Naive thymus-derived CD4-positive, alpha-beta T cell (primary cell): ENCODE measurements at regions of chr5 and their contacts with region 1.

Region 1: GRCh38 chr5:54905943-54906537 is 79.4 kb downstream of the ESM1 start:
- DNase-seq: peak; percentile 26 to 65 (median 53)
- ATAC-seq: peak; percentile 55
- H3K4me3 ChIP-seq: no peak overlapping the region
- H3K4me3 Mint-ChIP-seq: no peak overlapping the region
- H3K27ac ChIP-seq: no peak overlapping the region
- H3K27ac Mint-ChIP-seq: no peak overlapping the region
- H3K4me1 ChIP-seq: peaks cover 0 to 10% of the 10 kb centered on the region in 2 donors
- H3K4me1 Mint-ChIP-seq: peaks cover 6 to 64% (median 10%) of the 10 kb centered on the region in 7 donors
- H3K27me3 ChIP-seq: no peaks in the 10 kb centered on the region
- H3K27me3 Mint-ChIP-seq: peaks cover 0 to 51% (median 6%) of the 10 kb centered on the region in 5 donors

Region 2: DNA sequence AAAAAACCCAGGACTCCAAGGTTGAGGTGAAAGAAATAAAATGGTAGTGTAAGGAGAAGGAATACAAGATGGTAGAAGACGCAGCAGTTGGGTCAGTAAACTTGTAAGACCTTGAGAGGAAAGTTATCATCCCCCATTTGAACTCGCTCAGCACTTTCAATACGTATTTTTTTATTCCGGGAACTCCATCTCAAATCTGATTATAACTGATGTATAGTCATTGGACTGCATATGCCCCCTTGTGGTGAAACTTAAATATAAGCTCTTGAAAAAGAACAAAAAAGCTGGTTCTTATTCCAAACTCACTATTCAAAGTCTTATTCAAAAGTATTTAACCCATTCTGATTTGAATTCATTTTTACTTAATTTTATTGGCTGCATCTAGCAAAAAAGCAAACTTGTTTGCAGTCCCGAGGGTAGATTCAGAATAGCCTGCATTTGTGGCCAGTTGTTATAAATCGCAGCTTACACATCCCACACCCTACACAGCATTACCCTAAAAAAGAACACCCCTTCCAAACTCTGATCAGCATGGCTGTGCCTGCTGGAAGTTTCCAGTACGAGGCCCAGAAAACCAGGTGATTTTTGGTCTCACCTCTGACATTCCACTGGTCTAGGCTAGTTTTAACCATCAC is 38.6 kb before region 1 on chr5:
- CTCF ChIA-PET with region 1: no interaction called
- POLR2A ChIA-PET with region 1: no interaction called
- intact Hi-C with region 1: loop called in 1 of 2 experiments (anchors 2 kb)
- DNase-seq: peak in 7 of 9 donors; percentile 38 to 66 (median 59)
- ATAC-seq: peak; percentile 83
- H3K4me3 ChIP-seq: peak overlapping the region; percentile 33
- H3K4me3 Mint-ChIP-seq: peak overlapping the region; percentile 2 to 80 (median 52)
- H3K27ac ChIP-seq: no peak overlapping the region
- H3K27ac Mint-ChIP-seq: peak overlapping the region in 4 of 9 donors; percentile 44 to 60 (median 52)
- H3K4me1 ChIP-seq: no peaks in the 10 kb centered on the region
- H3K4me1 Mint-ChIP-seq: peaks cover 0 to 20% (median 9%) of the 10 kb centered on the region in 7 donors
- H3K27me3 ChIP-seq: no peaks in the 10 kb centered on the region
- H3K27me3 Mint-ChIP-seq: peaks cover 0 to 69% (median 11%) of the 10 kb centered on the region in 5 donors

Region 3: GRCh38 chr5:55021410-55021809 is 115.4 kb after region 1 on chr5:
- CTCF ChIA-PET with region 1: no interaction called
- POLR2A ChIA-PET with region 1: no interaction called
- intact Hi-C with region 1: no loop called
- DNase-seq: no peak
- ATAC-seq: no peak
- H3K4me3 ChIP-seq: no peak overlapping the region
- H3K4me3 Mint-ChIP-seq: peak overlapping the region in 2 of 10 donors; percentile 19 to 30
- H3K27ac ChIP-seq: no peak overlapping the region
- H3K27ac Mint-ChIP-seq: peak overlapping the region in 1 of 9 donors; percentile 31
- H3K4me1 ChIP-seq: peaks cover 23 to 31% of the 10 kb centered on the region in 2 donors
- H3K4me1 Mint-ChIP-seq: peaks cover 18 to 51% (median 49%) of the 10 kb centered on the region in 7 donors
- H3K27me3 ChIP-seq: no peaks in the 10 kb centered on the region
- H3K27me3 Mint-ChIP-seq: no peaks in the 10 kb centered on the region

Region 4: DNA sequence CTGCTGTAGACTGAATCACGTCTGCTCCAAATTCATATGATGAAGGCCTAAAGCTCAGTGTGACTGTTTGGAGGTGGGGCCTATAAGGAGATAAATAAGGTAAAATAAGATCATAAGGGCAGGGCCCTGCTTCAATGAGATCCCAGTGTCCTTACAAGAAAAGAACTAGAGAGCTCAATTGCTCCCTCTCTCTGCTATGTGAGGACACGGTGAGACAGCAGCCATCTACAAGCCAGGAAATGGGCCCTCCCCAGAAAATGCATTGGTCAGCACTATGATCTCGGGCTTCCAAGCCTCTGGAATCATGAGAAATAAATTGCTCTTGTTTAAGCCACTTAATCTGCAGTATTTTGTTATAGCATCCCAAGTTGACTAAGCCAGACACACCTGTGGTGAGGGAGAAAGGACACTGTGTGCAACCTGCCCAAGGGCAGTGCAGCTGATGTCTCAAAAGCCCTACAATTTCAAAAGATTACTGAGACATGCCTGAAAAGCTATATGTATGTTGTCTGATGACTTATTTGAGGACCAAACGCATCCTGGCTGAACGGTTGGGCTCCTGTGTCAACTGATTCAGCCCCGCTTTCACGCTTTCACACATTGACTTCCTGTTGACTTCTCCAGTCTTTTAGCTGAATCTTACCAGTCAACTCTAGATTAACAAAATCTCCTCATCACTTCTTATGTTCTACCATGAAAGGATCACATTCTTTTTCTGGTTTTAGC is 131.2 kb after region 1 on chr5:
- CTCF ChIA-PET with region 1: interaction called, 3 read pairs
- POLR2A ChIA-PET with region 1: no interaction called
- intact Hi-C with region 1: loop called in 1 of 2 experiments (anchors 5 kb)
- DNase-seq: peak in 8 of 9 donors; percentile 10 to 69 (median 50)
- ATAC-seq: peak; percentile 89
- H3K4me3 ChIP-seq: no peak overlapping the region
- H3K4me3 Mint-ChIP-seq: peak overlapping the region; percentile 6 to 55 (median 48)
- H3K27ac ChIP-seq: peak overlapping the region; percentile 49
- H3K27ac Mint-ChIP-seq: peak overlapping the region; percentile 55 to 99 (median 86)
- H3K4me1 ChIP-seq: peaks cover 17 to 31% of the 10 kb centered on the region in 2 donors
- H3K4me1 Mint-ChIP-seq: peaks cover 11 to 53% (median 32%) of the 10 kb centered on the region in 7 donors
- H3K27me3 ChIP-seq: no peaks in the 10 kb centered on the region
- H3K27me3 Mint-ChIP-seq: no peaks in the 10 kb centered on the region

Region 5: DNA sequence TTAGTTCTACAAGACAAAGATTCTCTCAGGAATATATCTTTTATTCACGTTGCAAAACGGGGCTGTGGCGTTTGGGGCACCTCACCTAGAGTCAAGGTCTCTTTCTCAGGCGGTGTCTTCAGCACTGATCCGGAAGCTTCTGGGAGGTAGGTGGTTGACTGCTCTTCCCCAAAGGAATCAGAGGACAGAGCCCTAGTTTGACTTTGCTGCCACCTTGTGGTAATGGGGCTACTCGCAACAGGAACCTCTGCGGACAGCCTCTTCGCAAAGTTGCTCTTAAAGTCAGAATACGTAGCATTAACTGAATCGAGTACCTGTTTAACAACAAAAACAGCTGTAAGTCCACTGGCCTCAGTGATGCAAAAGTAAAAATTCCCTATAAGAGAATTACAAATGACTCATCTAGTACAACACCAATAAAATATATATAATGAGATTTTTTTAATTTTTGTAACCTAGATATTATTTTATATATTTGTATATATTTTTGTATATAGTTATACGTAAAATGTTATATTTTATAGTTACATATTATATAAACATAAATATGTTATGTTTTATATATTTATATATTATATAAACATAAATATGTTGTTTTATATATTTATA is 240.6 kb after region 1 on chr5:
- CTCF ChIA-PET with region 1: interaction called, 15 read pairs
- POLR2A ChIA-PET with region 1: no interaction called
- intact Hi-C with region 1: loop called (anchors 1 kb)
- DNase-seq: peak; percentile 47 to 84 (median 77)
- ATAC-seq: peak; percentile 91
- H3K4me3 ChIP-seq: no peak overlapping the region
- H3K4me3 Mint-ChIP-seq: peak overlapping the region in 7 of 10 donors; percentile 21 to 74 (median 42)
- H3K27ac ChIP-seq: no peak overlapping the region
- H3K27ac Mint-ChIP-seq: peak overlapping the region in 6 of 9 donors; percentile 1 to 60 (median 27)
- H3K4me1 ChIP-seq: peaks cover 5 to 14% of the 10 kb centered on the region in 2 donors
- H3K4me1 Mint-ChIP-seq: peaks cover 12 to 38% (median 20%) of the 10 kb centered on the region in 7 donors
- H3K27me3 ChIP-seq: no peaks in the 10 kb centered on the region
- H3K27me3 Mint-ChIP-seq: peaks cover 0 to 62% (median 0%) of the 10 kb centered on the region in 5 donors

Region 6: DNA sequence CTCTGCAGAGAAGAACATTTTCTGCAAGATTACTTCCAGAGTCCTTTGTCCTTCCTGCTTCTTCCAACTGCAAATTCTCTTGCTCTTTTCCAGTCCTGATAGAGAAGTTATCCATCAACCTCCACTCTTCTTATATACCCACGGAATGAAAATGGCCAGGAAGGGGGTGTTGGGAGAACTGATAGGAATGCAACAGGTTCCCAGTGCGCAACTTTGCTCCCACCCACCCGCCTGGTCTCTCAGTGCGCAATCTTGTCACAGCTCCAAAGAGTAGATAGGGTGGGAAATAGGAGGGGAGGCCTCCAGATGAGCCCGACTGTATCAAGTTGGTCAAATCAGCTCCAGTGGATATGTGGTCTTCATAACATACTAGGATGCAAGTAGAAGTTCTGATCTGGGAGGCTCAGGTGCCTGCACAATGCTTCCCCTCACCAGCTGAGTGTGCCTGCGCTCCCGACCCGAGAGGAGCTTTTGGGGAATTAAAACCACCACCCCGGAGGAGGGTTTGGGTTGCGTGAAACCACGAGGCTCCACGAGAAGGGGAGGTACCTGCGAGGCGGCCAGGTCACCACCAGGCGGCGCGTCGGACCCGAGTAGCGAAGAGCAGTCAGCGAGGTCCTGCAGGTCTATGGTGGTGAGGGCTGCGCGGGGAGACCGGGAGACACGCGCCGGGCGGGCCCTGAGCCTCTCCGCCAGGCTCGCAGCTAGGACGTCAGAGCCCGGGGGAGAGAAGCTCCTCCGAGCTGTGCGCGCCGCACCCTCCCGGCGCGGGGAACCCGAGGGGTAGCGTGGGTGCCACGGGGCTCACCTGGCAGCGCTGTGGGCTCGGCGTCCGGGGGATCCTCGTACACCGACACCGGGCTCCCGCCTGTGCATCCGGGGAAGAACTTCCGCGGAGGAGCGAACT is 320.2 kb after region 1 on chr5:
- CTCF ChIA-PET with region 1: no interaction called
- POLR2A ChIA-PET with region 1: no interaction called
- intact Hi-C with region 1: loop called in 1 of 2 experiments (anchors 10 kb)
- DNase-seq: peak in 4 of 9 donors; percentile 11 to 62 (median 29)
- ATAC-seq: peak; percentile 54
- H3K4me3 ChIP-seq: peak overlapping the region; percentile 30
- H3K4me3 Mint-ChIP-seq: peak overlapping the region; percentile 59 to 83 (median 70)
- H3K27ac ChIP-seq: no peak overlapping the region
- H3K27ac Mint-ChIP-seq: peak overlapping the region in 1 of 9 donors; percentile 18
- H3K4me1 ChIP-seq: peaks cover 16 to 21% of the 10 kb centered on the region in 2 donors
- H3K4me1 Mint-ChIP-seq: peaks cover 19 to 48% (median 46%) of the 10 kb centered on the region in 7 donors
- H3K27me3 ChIP-seq: peaks cover 21 to 66% of the 10 kb centered on the region in 2 donors
- H3K27me3 Mint-ChIP-seq: peaks cover 79 to 90% (median 86%) of the 10 kb centered on the region in 5 donors